Testis (tissue), 5 donors: ENCODE measurements at regions of chr12 and their contacts with region 1.

Region 1: DNA sequence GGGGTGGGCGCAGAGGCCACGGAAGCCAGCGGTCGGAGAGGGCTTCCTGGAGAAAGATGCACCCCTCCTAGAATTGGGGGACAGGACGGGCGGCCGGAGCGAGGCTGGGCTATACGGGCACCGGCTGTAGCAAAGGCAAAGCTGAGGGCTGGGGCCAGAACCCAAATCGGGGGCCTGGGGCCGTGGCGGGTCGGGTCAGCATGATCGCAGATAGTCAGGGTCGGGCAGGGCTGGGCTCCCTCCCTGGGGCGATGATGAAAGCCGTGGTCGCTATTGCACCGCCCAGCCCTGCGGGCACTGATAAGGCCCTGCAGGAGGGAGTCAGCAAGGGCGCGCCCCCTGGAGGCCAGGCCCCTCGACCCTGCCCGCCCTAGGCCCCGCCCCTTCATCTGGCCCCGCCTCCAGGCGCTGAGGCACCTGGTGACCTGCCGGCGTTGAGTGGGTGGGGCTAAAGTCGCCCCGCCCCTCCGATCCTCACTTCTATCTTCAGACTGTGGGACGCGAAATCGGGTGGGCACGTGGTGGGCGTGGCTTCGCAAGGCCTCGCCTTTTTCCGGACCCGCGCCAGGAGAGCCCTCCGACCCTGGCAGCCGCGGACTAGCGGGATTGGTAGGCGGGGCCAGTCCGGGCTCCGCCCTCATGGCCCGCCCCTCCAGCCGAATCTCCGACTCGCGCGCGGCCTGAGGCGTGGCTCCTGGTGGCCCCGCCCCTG is 418 bp upstream of the SH2B3 start:
- DNase-seq: peak; percentile 98
- H3K4me3 ChIP-seq: peak overlapping the region; percentile 77 to 90
- H3K27ac ChIP-seq: peak overlapping the region; percentile 6 to 89
- H3K4me1 ChIP-seq: peaks cover 29% of the 10 kb centered on the region
- H3K27me3 ChIP-seq: no peaks in the 10 kb centered on the region
- CTCF ChIP-seq: peak; percentile 50 to 59 (median 53)
- POLR2A ChIP-seq: no peak

Region 2: GRCh38 chr12:111532741-111533140 is 127.4 kb after region 1 on chr12:
- intact Hi-C with region 1: no loop called
- DNase-seq: no peak
- H3K4me3 ChIP-seq: no peak overlapping the region
- H3K27ac ChIP-seq: no peak overlapping the region
- H3K4me1 ChIP-seq: peaks cover 7% of the 10 kb centered on the region
- H3K27me3 ChIP-seq: no peaks in the 10 kb centered on the region
- CTCF ChIP-seq: no peak
- POLR2A ChIP-seq: no peak

Region 3: DNA sequence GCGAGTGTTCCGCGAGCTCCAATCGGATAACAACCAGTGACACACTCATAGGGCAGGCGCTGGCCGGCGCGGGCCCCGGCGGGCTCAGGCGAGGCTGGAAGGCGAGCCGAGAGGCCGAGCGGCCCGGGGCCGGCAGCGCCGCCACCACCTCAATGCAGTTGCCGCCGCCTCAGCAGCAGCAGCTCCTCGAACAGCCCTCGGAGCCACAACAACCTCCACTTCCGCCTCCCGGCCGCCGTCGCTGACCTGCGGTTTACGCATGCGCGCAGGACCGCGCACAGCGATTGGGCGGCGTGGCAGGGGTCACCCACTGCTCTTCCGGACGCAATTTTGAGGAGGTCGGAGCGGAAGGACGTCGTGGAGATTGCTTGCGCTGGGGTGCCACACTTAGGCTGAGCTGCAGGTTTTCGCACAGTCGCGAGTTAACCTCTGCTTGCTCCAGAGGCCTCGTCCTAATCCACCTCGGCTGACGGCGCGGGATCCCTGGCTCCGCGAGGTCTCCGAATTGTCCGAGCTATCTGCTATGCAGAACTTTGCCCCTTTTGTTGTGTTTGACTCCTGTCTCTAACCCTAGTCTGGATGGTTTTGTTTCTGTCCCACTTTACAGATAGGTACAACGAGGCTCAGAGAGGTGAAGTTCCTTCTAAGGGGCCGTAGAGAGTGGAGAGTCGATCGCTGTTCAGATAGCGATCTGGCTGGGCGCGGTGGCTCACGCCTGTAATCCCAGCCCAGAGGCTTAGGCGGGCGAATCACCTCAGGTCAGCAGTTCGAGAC is 280.6 kb after region 1 on chr12 and contains the starts of genes ACAD10 and BRAP:
- intact Hi-C with region 1: loop called (anchors 10 kb)
- DNase-seq: peak; percentile 94
- H3K4me3 ChIP-seq: peak within 1 kb of the TSS; percentile 91 to 95
- H3K27ac ChIP-seq: peak within 1 kb of the TSS; percentile 78 to 86
- H3K4me1 ChIP-seq: peaks cover 17% of the 10 kb centered on the region
- H3K27me3 ChIP-seq: no peaks in the 10 kb centered on the region
- CTCF ChIP-seq: no peak
- POLR2A ChIP-seq: no peak
- total RNA-seq, gene ACAD10: 58.2 to 65.7 TPM
- total RNA-seq, gene BRAP: 71.4 to 99.1 TPM